B cell (primary cell): ENCODE measurements at regions of chr9 and their contacts with region 1.

Region 1: GRCh38 chr9:122264360-122265148 is at the starts of genes MRRF and RBM18:
- DNase-seq: peak; percentile 96
- ATAC-seq: peak; percentile 85
- H3K4me3 ChIP-seq: peak within 1 kb of the TSS; percentile 77 to 96 (median 90)
- H3K4me3 Mint-ChIP-seq: peak within 1 kb of the TSS; percentile 97
- H3K27ac ChIP-seq: peak within 1 kb of the TSS; percentile 94 to 100
- H3K27ac Mint-ChIP-seq: peak within 1 kb of the TSS; percentile 99
- H3K4me1 ChIP-seq: peaks cover 23 to 28% of the 10 kb centered on the region in 2 donors
- H3K4me1 Mint-ChIP-seq: peaks cover 44% of the 10 kb centered on the region
- H3K27me3 ChIP-seq: no peaks in the 10 kb centered on the region
- H3K27me3 Mint-ChIP-seq: no peaks in the 10 kb centered on the region
- CTCF ChIP-seq: no peak
- total RNA-seq, gene MRRF: 44.1 and 44.9 TPM in 2 replicates
- total RNA-seq, gene RBM18: 12.4 and 15.7 TPM in 2 replicates

Region 2: DNA sequence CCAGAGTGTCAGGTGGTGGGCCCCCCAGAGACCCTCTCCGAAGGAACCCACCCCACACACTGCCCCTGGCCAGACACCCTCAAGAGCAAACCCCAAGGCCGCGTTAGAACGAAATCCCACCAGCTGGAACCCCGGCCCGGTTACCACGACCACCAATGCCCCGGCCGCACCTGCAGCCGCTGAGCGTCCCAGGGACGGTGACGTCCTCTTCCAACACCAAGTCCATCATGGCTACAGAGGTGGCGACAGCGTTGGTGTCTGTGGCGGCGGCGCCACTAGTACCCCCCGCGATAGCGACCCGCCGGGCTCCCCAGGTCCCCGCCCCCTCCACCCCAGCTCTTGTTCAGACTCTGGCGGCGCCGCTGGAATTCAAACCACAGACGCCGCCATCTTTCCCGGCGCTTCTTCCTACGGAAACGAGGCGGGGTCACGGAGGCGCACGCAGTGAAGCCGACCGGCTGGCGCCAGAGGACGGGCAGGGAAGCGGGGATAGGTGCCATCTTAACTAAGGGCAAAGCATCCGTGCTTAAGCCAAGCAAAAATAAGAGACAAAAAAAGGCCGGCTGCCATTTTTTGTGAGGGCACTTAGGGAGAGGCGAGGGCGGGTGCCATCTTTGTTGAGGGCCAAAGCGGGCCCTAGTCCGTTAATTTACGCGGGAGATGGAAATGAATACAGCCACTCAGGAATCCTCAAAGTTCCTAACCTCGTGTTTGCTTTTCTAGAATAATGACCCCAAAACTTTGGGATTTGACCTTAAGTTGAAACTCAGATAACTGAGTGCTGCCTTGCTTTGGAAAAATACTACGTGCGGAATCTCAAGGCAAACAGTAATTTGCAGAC is 1684.6 kb before region 1 on chr9 and contains the start of gene CDK5RAP2:
- CTCF ChIA-PET with region 1: no interaction called
- POLR2A ChIA-PET with region 1: no interaction called
- intact Hi-C with region 1: loop called (anchors 5 kb)
- DNase-seq: peak; percentile 94
- ATAC-seq: peak; percentile 92
- H3K4me3 ChIP-seq: peak within 1 kb of the TSS; percentile 70 to 92 (median 86)
- H3K4me3 Mint-ChIP-seq: peak within 1 kb of the TSS; percentile 94
- H3K27ac ChIP-seq: peak within 1 kb of the TSS; percentile 77 to 78
- H3K27ac Mint-ChIP-seq: peak within 1 kb of the TSS; percentile 93
- H3K4me1 ChIP-seq: peaks cover 27 to 31% of the 10 kb centered on the region in 2 donors
- H3K4me1 Mint-ChIP-seq: peaks cover 53% of the 10 kb centered on the region
- H3K27me3 ChIP-seq: no peaks in the 10 kb centered on the region
- H3K27me3 Mint-ChIP-seq: no peaks in the 10 kb centered on the region
- CTCF ChIP-seq: no peak
- total RNA-seq, gene CDK5RAP2: 116 and 122 TPM in 2 replicates

Region 3: DNA sequence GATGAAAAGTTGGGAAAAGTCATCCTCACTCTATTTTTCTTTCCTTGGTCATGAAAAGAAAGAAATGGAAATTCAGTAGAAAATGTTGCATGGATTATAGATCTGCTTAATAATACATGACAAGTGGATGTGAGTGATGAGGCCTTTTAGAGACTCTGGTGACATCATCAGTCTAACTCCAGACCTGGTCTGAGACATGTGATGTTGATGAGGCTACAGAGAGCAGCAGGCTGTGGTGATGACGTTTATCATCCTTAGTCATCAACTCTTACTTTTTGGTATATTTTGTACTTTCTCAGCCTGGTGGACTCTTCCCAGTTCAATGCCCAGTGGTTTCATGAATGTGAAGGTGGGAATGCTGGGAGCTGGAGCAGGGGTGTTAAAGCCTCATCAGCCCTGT is 287.8 kb before region 1 on chr9:
- CTCF ChIA-PET with region 1: no interaction called
- POLR2A ChIA-PET with region 1: no interaction called
- intact Hi-C with region 1: no loop called
- DNase-seq: no peak
- ATAC-seq: no peak
- H3K4me3 ChIP-seq: no peak overlapping the region
- H3K4me3 Mint-ChIP-seq: no peak overlapping the region
- H3K27ac ChIP-seq: no peak overlapping the region
- H3K27ac Mint-ChIP-seq: no peak overlapping the region
- H3K4me1 ChIP-seq: peaks cover 0 to 13% of the 10 kb centered on the region in 2 donors
- H3K4me1 Mint-ChIP-seq: peaks cover 23% of the 10 kb centered on the region
- H3K27me3 ChIP-seq: no peaks in the 10 kb centered on the region
- H3K27me3 Mint-ChIP-seq: no peaks in the 10 kb centered on the region
- CTCF ChIP-seq: no peak

Region 4: DNA sequence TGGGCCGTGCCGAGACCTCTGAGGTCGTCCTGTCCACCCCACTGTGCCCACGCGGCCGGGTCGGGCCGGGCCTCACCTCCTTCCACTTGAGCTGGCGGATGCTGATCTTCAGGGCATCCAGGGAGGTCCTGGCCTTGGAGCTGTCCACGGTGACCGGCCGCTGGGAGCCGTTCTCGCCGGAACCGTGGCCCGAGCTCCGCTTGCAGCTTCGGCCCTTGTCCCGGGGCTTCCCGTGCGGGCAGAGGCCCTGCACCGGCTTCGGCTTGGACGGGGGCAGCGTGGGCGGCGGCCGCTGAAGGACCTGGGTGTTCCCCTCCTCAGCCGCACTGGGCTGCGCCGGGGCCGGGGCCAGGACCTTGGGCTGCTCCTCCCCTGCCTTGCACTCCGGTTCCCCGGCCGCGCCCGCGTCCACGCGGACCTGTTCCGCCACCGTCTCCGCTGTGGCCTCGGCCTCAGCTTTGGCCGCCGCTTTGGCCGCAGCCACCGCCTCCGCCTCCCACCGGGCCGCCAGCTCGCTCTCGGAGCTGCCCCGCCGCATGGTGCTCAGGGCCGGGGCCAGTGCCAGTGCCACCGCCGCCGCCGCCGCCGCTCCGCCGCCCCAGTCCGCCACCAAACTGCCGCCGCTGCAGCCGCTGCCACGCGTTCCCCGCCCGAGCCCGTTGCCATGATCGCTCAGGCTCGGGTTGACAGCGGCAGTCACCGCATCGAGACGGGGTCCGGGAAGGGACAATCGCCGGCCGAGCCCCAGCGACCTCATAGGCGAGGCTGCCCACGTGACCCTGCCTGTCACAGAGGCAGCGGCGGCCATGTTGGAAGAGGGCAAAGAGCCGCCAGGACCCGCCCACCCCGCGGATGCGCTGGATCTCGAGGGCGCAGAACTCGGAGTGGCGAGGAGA is 171.7 kb before region 1 on chr9 and contains the start of gene TTLL11:
- CTCF ChIA-PET with region 1: interaction called, 3 read pairs
- POLR2A ChIA-PET with region 1: no interaction called
- intact Hi-C with region 1: loop called (anchors 1 kb)
- DNase-seq: peak; percentile 97
- ATAC-seq: peak; percentile 94
- H3K4me3 ChIP-seq: peak within 1 kb of the TSS; percentile 46 to 78 (median 77)
- H3K4me3 Mint-ChIP-seq: peak within 1 kb of the TSS; percentile 90
- H3K27ac ChIP-seq: peak within 1 kb of the TSS in 1 of 2 donors; percentile 60
- H3K27ac Mint-ChIP-seq: peak within 1 kb of the TSS; percentile 33
- H3K4me1 ChIP-seq: peaks cover 24 to 29% of the 10 kb centered on the region in 2 donors
- H3K4me1 Mint-ChIP-seq: peaks cover 45% of the 10 kb centered on the region
- H3K27me3 ChIP-seq: no peaks in the 10 kb centered on the region
- H3K27me3 Mint-ChIP-seq: peaks cover 9% of the 10 kb centered on the region
- CTCF ChIP-seq: no peak
- total RNA-seq, gene TTLL11: 3.8 and 3.9 TPM in 2 replicates

Region 5: GRCh38 chr9:122159026-122159924 is 105.3 kb before region 1 on chr9 and contains the starts of genes MORN5 and NDUFA8:
- CTCF ChIA-PET with region 1: interaction called, 4 read pairs
- POLR2A ChIA-PET with region 1: interaction called, 4 read pairs
- intact Hi-C with region 1: loop called (anchors 1 kb)
- DNase-seq: peak; percentile 97
- ATAC-seq: peak; percentile 97
- H3K4me3 ChIP-seq: peak within 1 kb of the TSS; percentile 69 to 97 (median 91)
- H3K4me3 Mint-ChIP-seq: peak within 1 kb of the TSS; percentile 96
- H3K27ac ChIP-seq: peak within 1 kb of the TSS; percentile 73 to 83
- H3K27ac Mint-ChIP-seq: peak within 1 kb of the TSS; percentile 92
- H3K4me1 ChIP-seq: peaks cover 9% of the 10 kb centered on the region in 2 donors
- H3K4me1 Mint-ChIP-seq: peaks cover 35% of the 10 kb centered on the region
- H3K27me3 ChIP-seq: peaks cover 0 to 19% (median 0%) of the 10 kb centered on the region in 4 experiments
- H3K27me3 Mint-ChIP-seq: peaks cover 23% of the 10 kb centered on the region
- CTCF ChIP-seq: no peak
- total RNA-seq, gene MORN5: not detected in 2 replicates
- total RNA-seq, gene NDUFA8: 12.7 and 15.7 TPM in 2 replicates

Region 6: DNA sequence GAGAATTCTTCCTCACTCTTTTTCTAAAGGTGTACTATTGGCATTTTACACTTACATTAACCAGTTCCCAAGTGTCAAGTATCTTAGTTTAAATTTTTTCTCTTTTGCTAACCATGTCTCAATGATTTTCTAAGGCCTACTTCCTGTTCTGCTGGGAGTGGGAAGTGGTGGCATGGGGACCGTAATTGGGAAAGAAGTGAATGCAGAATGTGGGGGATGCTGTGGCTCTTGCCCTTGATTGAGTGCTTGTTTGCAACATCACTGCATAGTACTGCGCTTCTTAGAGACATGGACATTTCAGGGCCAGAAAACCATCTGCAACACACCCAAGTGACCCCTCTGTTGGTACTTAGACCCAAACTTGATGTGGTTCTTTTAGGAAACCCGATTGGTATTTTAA is 33.0 kb after region 1 on chr9:
- CTCF ChIA-PET with region 1: no interaction called
- POLR2A ChIA-PET with region 1: no interaction called
- intact Hi-C with region 1: no loop called
- DNase-seq: no peak
- ATAC-seq: no peak
- H3K4me3 ChIP-seq: no peak overlapping the region
- H3K4me3 Mint-ChIP-seq: no peak overlapping the region
- H3K27ac ChIP-seq: no peak overlapping the region
- H3K27ac Mint-ChIP-seq: no peak overlapping the region
- H3K4me1 ChIP-seq: no peaks in the 10 kb centered on the region
- H3K4me1 Mint-ChIP-seq: no peaks in the 10 kb centered on the region
- H3K27me3 ChIP-seq: no peaks in the 10 kb centered on the region
- H3K27me3 Mint-ChIP-seq: no peaks in the 10 kb centered on the region
- CTCF ChIP-seq: no peak

Region 7: GRCh38 chr9:122453677-122454135 is 189.2 kb after region 1 on chr9:
- CTCF ChIA-PET with region 1: no interaction called
- POLR2A ChIA-PET with region 1: no interaction called
- intact Hi-C with region 1: loop called (anchors 10 kb)
- DNase-seq: no peak
- ATAC-seq: no peak
- H3K4me3 ChIP-seq: no peak overlapping the region
- H3K4me3 Mint-ChIP-seq: no peak overlapping the region
- H3K27ac ChIP-seq: no peak overlapping the region
- H3K27ac Mint-ChIP-seq: no peak overlapping the region
- H3K4me1 ChIP-seq: no peaks in the 10 kb centered on the region
- H3K4me1 Mint-ChIP-seq: no peaks in the 10 kb centered on the region
- H3K27me3 ChIP-seq: peaks cover 0 to 4% (median 0%) of the 10 kb centered on the region in 4 experiments
- H3K27me3 Mint-ChIP-seq: peaks cover 22% of the 10 kb centered on the region
- CTCF ChIP-seq: no peak

Region 8: GRCh38 chr9:122827761-122828093 is 563.2 kb after region 1 on chr9:
- CTCF ChIA-PET with region 1: no interaction called
- POLR2A ChIA-PET with region 1: interaction called, 4 read pairs
- intact Hi-C with region 1: loop called (anchors 1 kb)
- DNase-seq: no peak
- ATAC-seq: peak; percentile 1
- H3K4me3 ChIP-seq: peak overlapping the region; percentile 74 to 98 (median 77)
- H3K4me3 Mint-ChIP-seq: peak overlapping the region; percentile 92
- H3K27ac ChIP-seq: peak overlapping the region; percentile 82 to 85
- H3K27ac Mint-ChIP-seq: peak overlapping the region; percentile 88
- H3K4me1 ChIP-seq: peaks cover 8 to 20% of the 10 kb centered on the region in 2 donors
- H3K4me1 Mint-ChIP-seq: peaks cover 31% of the 10 kb centered on the region
- H3K27me3 ChIP-seq: no peaks in the 10 kb centered on the region
- H3K27me3 Mint-ChIP-seq: no peaks in the 10 kb centered on the region
- CTCF ChIP-seq: no peak

Region 9: DNA sequence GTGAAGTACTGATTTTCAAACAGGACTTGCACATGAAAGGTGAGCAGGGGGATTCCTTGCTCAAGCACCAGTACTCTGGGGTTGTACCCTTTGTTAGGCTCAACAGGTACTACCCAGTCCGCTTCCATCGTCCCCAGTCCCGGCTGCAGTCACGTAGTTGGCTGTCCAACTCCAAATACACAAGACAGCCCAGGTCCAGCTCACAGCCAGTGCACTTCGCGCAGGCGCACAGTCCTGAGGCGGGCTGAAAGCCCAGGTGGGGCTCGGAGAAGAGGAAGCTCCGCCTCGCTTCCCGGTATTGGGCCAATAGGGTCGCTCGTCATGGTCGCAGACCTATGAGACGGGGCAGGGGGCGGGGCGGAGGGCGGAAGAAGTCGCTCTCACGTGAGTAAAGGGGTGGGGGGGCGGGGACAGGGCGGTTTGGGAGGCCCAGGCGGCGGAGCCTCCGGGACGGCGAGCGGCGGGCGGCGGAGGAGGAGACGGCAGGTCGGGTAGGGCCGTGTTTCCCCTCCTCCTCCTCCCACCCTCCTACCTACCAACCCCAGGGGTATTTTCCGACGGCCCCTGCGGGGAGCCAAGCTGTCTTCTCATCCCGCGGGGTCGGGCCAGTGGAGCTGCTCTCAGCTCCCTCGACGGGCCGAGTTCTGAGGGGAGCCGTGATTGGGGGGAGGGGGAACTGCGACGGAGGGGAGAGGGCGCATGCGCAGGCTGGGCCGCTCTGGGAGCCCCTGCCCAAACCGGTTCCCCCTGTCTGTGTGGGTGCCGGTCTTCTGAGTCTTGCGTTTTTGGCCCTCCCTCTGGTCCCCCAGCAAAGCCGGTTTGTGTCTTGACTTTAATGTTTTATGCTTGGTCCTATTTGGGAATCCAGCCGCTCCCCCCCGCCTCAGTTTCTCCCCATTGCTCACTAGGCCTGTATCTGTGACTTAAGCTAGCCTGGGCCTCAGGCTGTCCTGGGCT is 676.3 kb after region 1 on chr9 and contains the start of gene RABGAP1:
- CTCF ChIA-PET with region 1: no interaction called
- POLR2A ChIA-PET with region 1: no interaction called
- intact Hi-C with region 1: loop called (anchors 10 kb)
- DNase-seq: peak; percentile 98
- ATAC-seq: peak; percentile 99
- H3K4me3 ChIP-seq: peak within 1 kb of the TSS; percentile 75 to 85 (median 83)
- H3K4me3 Mint-ChIP-seq: peak within 1 kb of the TSS; percentile 89
- H3K27ac ChIP-seq: peak within 1 kb of the TSS; percentile 77 to 91
- H3K27ac Mint-ChIP-seq: peak within 1 kb of the TSS; percentile 81
- H3K4me1 ChIP-seq: peaks cover 16 to 17% of the 10 kb centered on the region in 2 donors
- H3K4me1 Mint-ChIP-seq: peaks cover 34% of the 10 kb centered on the region
- H3K27me3 ChIP-seq: no peaks in the 10 kb centered on the region
- H3K27me3 Mint-ChIP-seq: no peaks in the 10 kb centered on the region
- CTCF ChIP-seq: no peak
- total RNA-seq, gene RABGAP1: 79.7 and 81.0 TPM in 2 replicates

Region 10: GRCh38 chr9:123149067-123149466 is 884.5 kb after region 1 on chr9:
- CTCF ChIA-PET with region 1: no interaction called
- POLR2A ChIA-PET with region 1: no interaction called
- intact Hi-C with region 1: no loop called
- DNase-seq: no peak
- ATAC-seq: no peak
- H3K4me3 ChIP-seq: no peak overlapping the region
- H3K4me3 Mint-ChIP-seq: no peak overlapping the region
- H3K27ac ChIP-seq: no peak overlapping the region
- H3K27ac Mint-ChIP-seq: peak overlapping the region; percentile 47
- H3K4me1 ChIP-seq: no peaks in the 10 kb centered on the region
- H3K4me1 Mint-ChIP-seq: no peaks in the 10 kb centered on the region
- H3K27me3 ChIP-seq: no peaks in the 10 kb centered on the region
- H3K27me3 Mint-ChIP-seq: no peaks in the 10 kb centered on the region
- CTCF ChIP-seq: no peak